ENCODE measurements at regions of chr15 and their contacts with region 1.

Region 1: GRCh38 chr15:70097337-70098169 is at the start of gene TLE3:
- DNase-seq: peak; percentile 99
- ATAC-seq: peak; percentile 83
- H3K4me3 ChIP-seq: peak within 1 kb of the TSS; percentile 52 to 75
- H3K27ac ChIP-seq: peak within 1 kb of the TSS; percentile 78 to 88
- H3K4me1 ChIP-seq: peaks cover 0 to 2% of the 10 kb centered on the region in 2 donors
- H3K27me3 ChIP-seq: no peaks in the 10 kb centered on the region
- total RNA-seq, gene TLE3: 43.0 to 89.9 TPM

Region 2: DNA sequence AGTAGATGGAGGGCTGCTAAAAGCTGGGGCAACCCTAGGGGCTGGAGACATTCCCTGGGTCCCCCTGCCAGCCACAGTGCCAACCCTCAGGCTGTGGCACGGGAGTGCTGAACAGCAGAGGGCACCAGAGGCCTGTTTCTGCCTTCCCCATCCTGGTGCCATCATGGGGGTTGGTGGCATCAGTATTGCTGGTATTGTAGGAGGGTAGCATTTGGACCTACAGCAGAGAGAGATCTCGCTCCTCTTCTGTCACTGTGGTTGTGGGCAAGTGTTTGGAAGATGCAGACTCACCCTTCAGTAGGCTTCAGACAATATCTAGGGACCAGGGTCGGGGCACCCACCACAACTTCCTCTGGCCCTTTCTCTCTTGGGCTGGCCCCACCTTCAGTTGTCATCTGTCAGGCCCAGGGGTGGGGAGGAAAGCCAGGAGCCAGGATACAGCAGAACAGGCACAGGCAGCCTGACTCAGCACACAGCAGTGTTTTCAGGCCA is 521.5 kb before region 1 on chr15:
- intact Hi-C with region 1: loop called in 1 of 2 experiments (anchors 5 kb)
- DNase-seq: peak; percentile 79 to 86
- ATAC-seq: peak; percentile 79
- H3K4me3 ChIP-seq: no peak overlapping the region
- H3K27ac ChIP-seq: no peak overlapping the region
- H3K4me1 ChIP-seq: no peaks in the 10 kb centered on the region
- H3K27me3 ChIP-seq: no peaks in the 10 kb centered on the region

Region 3: DNA sequence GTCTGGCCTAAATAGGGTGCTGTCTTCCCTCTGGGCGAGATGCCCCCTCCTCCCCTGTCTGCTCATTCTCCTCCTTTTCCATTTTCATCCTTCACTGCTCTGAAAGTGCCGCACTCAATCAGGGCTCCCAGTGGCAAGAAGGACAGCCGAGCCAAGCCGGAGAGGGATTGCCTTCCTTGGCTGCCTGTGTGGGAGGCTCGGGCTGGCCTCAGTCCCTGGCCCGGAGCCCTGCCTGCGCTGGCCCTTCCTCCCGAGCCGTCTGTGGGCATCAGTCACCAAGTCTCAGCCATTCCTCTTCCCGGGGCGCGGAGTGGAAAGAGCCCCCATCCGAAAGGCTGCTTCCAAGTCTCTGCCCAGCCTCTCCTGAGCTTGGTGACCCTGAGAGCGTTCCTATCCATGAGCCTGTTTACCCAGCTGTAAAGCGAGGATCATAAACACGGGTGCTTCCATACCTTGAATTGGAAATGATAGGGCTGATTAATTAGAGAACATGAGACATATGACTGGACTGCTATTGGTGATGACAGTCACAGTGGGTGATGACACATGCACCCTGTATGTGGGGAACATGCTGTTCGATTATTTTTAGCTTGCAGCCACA is 59.2 kb after region 1 on chr15:
- intact Hi-C with region 1: loop called in 1 of 2 experiments (anchors 5 kb)
- DNase-seq: peak; percentile 83 to 91
- ATAC-seq: peak; percentile 77
- H3K4me3 ChIP-seq: no peak overlapping the region
- H3K27ac ChIP-seq: no peak overlapping the region
- H3K4me1 ChIP-seq: no peaks in the 10 kb centered on the region
- H3K27me3 ChIP-seq: no peaks in the 10 kb centered on the region

Region 4: DNA sequence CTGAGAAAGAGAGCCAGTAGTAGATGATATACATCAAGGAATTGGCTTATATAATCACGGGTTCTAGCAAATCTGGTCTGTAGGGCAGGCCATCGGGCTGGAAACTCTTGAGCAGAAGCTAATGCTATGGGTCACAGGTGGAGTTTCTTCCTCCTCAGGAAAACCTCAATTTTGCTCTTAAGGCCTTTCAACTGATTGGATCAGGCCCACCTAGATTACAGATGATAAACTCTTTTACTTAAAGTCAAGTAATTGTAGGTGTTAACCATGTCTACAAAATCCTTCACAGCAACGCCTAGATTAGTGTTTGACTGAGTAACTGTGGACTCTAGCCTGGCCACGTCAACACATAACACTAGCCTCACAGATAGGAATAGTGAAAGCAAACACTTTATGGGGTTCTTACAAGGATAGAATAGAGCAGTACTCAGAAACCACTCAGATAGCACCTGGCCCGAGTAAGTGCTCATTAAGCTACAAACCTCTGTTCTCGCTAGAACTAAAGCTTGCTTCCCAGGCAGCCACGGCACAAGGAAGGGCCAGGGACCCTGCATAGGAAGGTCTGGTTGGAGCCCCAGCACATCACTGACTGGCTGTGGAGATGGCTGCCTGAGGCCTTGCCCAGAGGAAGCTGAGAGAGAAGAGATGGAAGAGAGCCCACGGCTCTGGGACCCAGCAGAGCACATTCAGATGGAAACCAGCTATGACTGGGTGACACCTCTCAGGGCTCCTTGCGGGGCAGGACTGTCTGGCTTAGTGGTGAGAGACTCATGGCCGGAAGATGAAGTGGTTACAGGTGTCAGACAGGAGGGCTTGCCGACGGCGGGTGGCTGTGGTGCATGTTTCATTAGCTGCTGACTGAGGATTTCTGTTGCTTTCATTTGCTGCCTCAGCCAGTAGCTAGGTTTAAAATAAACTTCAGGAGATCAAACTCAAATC is 202.6 kb after region 1 on chr15:
- intact Hi-C with region 1: no loop called
- DNase-seq: no peak
- ATAC-seq: no peak
- H3K4me3 ChIP-seq: no peak overlapping the region
- H3K27ac ChIP-seq: no peak overlapping the region
- H3K4me1 ChIP-seq: no peaks in the 10 kb centered on the region
- H3K27me3 ChIP-seq: no peaks in the 10 kb centered on the region

Region 5: GRCh38 chr15:70964058-70964457 is 866.5 kb after region 1 on chr15:
- intact Hi-C with region 1: no loop called
- DNase-seq: no peak
- ATAC-seq: no peak
- H3K4me3 ChIP-seq: no peak overlapping the region
- H3K27ac ChIP-seq: no peak overlapping the region
- H3K4me1 ChIP-seq: no peaks in the 10 kb centered on the region
- H3K27me3 ChIP-seq: no peaks in the 10 kb centered on the region